Caki2 (cell line): ENCODE measurements at regions of chr12 and their contacts with region 1.

Region 1: DNA sequence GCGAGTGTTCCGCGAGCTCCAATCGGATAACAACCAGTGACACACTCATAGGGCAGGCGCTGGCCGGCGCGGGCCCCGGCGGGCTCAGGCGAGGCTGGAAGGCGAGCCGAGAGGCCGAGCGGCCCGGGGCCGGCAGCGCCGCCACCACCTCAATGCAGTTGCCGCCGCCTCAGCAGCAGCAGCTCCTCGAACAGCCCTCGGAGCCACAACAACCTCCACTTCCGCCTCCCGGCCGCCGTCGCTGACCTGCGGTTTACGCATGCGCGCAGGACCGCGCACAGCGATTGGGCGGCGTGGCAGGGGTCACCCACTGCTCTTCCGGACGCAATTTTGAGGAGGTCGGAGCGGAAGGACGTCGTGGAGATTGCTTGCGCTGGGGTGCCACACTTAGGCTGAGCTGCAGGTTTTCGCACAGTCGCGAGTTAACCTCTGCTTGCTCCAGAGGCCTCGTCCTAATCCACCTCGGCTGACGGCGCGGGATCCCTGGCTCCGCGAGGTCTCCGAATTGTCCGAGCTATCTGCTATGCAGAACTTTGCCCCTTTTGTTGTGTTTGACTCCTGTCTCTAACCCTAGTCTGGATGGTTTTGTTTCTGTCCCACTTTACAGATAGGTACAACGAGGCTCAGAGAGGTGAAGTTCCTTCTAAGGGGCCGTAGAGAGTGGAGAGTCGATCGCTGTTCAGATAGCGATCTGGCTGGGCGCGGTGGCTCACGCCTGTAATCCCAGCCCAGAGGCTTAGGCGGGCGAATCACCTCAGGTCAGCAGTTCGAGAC is at the starts of genes ACAD10 and BRAP:
- DNase-seq: peak; percentile 89
- total RNA-seq, gene ACAD10: 9.8 and 14.7 TPM in 2 replicates
- total RNA-seq, gene BRAP: 7.1 TPM in 2 replicates

Region 2: DNA sequence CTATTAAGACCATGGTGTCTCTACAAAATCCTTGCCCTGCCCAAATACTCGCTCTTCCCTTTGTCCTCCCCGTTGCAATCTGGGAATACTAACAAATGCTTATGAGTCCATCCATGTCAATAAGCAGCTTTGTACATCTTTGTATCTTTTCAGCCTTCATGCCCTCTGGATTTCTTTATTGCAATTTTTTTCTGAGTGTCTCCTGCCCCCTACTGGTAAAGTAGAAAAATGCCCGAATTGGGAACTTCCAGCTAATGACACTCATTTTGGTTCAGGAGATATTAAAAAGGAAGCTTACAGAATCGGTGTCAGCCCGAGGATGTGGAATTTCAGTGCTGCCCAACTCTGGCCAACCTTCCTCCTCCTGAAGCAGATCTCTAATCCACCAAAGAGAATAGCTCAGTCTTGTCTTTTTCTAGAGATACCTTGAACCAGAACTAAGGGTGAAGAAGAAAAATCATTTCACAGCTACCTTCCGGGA is 234.2 kb before region 1 on chr12:
- in situ Hi-C with region 1: loop called (anchors 25 kb)
- DNase-seq: peak; percentile 39

Region 3: DNA sequence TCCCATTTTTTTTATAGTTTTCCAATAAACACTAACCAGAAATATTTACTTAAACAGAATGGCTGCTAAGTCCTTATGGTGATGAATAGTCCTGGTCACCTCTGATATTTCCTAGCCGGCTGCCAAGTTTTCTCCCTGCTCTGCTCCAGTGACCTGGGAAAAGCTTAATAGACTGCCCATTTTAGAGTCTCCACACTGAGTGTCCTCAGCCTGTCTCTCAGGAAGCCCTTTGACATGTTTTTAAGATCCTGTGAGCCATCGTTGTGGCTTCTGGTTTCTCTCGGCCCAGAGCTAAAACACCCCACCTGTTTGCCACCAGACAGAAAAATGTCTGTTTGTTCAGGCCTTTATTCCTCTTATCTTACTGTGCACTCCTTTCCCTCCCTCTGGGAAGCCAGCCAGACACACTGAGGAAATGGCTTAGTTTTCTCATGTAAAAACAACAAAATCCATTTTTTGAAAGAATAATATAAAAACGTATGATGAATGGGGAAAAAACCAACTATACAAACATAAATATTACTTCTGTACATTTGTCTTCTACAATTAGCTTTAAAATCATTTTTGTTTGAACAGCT is 55.4 kb after region 1 on chr12:
- in situ Hi-C with region 1: no loop called
- DNase-seq: peak; percentile 36

Region 4: DNA sequence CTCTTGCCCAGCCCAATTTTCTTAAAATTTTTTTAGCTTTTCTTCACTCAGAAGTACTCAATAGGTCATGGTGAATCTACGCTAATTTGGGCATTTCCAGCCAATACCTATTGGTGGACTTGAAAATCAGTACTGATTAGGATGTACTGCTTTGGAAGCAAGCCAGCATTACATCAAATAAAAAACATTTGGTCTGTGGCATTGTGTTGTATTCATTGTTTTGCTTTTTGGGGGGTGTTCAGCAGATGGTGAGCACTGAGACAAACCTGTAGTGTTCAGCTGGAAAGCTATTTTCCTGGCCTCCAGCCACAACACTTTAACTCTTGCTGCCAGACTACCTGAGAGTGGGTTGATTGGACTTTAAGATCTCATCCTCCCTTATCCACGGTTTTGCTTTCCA is 160.1 kb after region 1 on chr12:
- in situ Hi-C with region 1: no loop called
- DNase-seq: no peak